Activated CD4-positive, alpha-beta memory T cell treated with anti-CD3 and anti-CD28 coated beads, Interleukin-2, amount 10 ng/mL, durations not matched to agents 7 days and 5 days (primary cell): ENCODE measurements at regions of chr12 and their contacts with region 1.

Region 1: GRCh38 chr12:89244536-89244935 is 107.8 kb downstream of the DUSP6 start:
- DNase-seq: peak; percentile 48
- H3K4me3 Mint-ChIP-seq: peak overlapping the region; percentile 55
- H3K27ac Mint-ChIP-seq: peak overlapping the region; percentile 96
- H3K4me1 Mint-ChIP-seq: peaks cover 56% of the 10 kb centered on the region
- H3K27me3 Mint-ChIP-seq: no peaks in the 10 kb centered on the region

Region 2: GRCh38 chr12:89040146-89040964 is 204.2 kb before region 1 on chr12:
- CTCF ChIA-PET with region 1: interaction called, 12 read pairs
- POLR2A ChIA-PET with region 1: interaction called, 26 read pairs
- DNase-seq: peak; percentile 90
- H3K4me3 Mint-ChIP-seq: peak overlapping the region; percentile 35
- H3K27ac Mint-ChIP-seq: peak overlapping the region; percentile 96
- H3K4me1 Mint-ChIP-seq: peaks cover 58% of the 10 kb centered on the region
- H3K27me3 Mint-ChIP-seq: no peaks in the 10 kb centered on the region

Region 3: DNA sequence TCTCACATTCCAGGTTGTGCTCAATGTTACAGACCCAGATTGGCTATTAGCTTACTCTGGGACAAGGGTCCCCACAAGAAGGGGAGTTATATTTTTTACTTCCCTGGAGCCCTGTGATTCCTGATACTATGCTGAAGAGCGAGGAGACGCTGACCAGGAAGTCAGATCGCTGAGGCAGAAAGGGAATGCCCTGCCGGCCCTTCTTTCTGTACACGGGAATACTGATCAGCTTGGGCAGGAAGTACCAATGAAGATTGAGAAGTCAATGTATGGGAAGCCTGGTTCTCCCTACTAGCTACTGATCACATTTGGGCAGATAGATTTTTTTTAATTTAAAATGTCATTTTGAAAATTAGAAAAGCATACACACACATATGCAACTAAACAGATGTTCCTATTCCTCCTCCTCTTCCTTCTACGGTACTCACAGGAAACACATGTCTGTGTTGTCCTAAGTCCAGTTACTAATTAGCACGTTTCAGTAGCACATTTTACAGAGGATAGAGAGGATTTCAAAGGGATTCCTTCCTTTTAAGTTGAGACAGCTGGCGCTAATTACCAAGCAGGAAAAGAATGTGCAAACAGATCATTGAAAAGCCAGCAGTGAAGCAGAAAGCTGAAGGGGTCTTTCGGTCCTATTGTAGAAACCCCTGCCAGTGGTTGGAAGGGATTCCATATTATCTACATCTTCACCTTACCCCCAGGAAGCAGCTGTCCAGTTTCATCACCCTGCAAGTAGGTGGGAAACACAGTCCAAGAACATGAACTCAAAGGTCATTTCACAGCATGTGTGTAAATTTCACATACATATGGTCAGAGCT is 184.6 kb before region 1 on chr12:
- CTCF ChIA-PET with region 1: no interaction called
- POLR2A ChIA-PET with region 1: no interaction called
- DNase-seq: no peak
- H3K4me3 Mint-ChIP-seq: no peak overlapping the region
- H3K27ac Mint-ChIP-seq: no peak overlapping the region
- H3K4me1 Mint-ChIP-seq: peaks cover 4% of the 10 kb centered on the region
- H3K27me3 Mint-ChIP-seq: no peaks in the 10 kb centered on the region

Region 4: GRCh38 chr12:89179983-89180382 is 64.6 kb before region 1 on chr12:
- CTCF ChIA-PET with region 1: interaction called, 26 read pairs
- POLR2A ChIA-PET with region 1: interaction called, 54 read pairs
- DNase-seq: no peak
- H3K4me3 Mint-ChIP-seq: no peak overlapping the region
- H3K27ac Mint-ChIP-seq: peak overlapping the region; percentile 80
- H3K4me1 Mint-ChIP-seq: peaks cover 50% of the 10 kb centered on the region
- H3K27me3 Mint-ChIP-seq: no peaks in the 10 kb centered on the region

Region 5: DNA sequence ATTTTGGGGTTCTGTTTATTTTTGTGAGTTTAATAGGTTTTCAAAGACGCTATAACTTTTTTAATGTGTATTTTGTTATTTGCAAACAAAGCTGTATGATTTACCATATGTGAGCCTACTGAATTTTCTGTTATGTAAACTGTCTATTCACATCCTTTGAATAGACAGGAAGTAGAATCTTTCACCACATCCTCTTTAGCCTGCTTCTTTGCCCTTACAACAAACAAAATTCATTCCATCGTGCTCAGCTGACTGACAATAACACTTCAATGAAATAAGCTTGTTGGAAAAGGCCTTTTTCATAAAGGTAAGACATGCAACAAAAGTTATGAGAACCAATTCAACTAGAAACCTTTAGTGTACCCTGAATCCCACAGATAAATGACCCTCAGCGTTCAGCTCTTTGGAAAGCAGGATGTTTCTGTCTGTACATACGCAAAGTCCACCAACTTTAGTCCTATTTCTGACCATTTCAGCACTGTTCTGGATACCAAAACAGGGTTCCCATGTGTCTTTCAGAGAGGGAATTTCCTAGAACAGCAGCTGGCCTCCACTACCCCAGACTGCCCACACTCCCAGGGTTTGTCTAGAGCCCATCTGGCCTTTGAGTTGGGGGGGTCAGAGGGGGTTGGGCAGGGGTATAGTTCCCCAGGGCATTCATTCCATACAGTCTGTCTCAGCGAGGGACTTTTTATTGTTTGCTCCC is 36.5 kb after region 1 on chr12:
- CTCF ChIA-PET with region 1: interaction called, 5 read pairs
- POLR2A ChIA-PET with region 1: interaction called, 28 read pairs
- DNase-seq: no peak
- H3K4me3 Mint-ChIP-seq: peak overlapping the region; percentile 52
- H3K27ac Mint-ChIP-seq: peak overlapping the region; percentile 91
- H3K4me1 Mint-ChIP-seq: peaks cover 25% of the 10 kb centered on the region
- H3K27me3 Mint-ChIP-seq: no peaks in the 10 kb centered on the region

Region 6: GRCh38 chr12:89470741-89471509 is 226.4 kb after region 1 on chr12:
- CTCF ChIA-PET with region 1: no interaction called
- POLR2A ChIA-PET with region 1: interaction called, 16 read pairs
- DNase-seq: no peak
- H3K4me3 Mint-ChIP-seq: no peak overlapping the region
- H3K27ac Mint-ChIP-seq: peak overlapping the region; percentile 84
- H3K4me1 Mint-ChIP-seq: peaks cover 81% of the 10 kb centered on the region
- H3K27me3 Mint-ChIP-seq: no peaks in the 10 kb centered on the region